Natural killer cell (primary cell): ENCODE measurements at regions of chr3 and their contacts with region 1.

Region 1: GRCh38 chr3:120558771-120559241 is 37.3 kb upstream of the NDUFB4 start:
- DNase-seq: peak; percentile 89 to 94
- ATAC-seq: peak; percentile 92 to 96 (median 95)
- H3K4me3 ChIP-seq: peak overlapping the region; percentile 17
- H3K4me3 Mint-ChIP-seq: peak overlapping the region; percentile 77
- H3K27ac ChIP-seq: no peak overlapping the region
- H3K27ac Mint-ChIP-seq: peak overlapping the region in 1 of 2 donors; percentile 49
- H3K4me1 ChIP-seq: peaks cover 10% of the 10 kb centered on the region
- H3K4me1 Mint-ChIP-seq: peaks cover 12 to 21% of the 10 kb centered on the region in 2 donors
- H3K27me3 ChIP-seq: no peaks in the 10 kb centered on the region
- H3K27me3 Mint-ChIP-seq: peaks cover 10% of the 10 kb centered on the region in 2 donors
- CTCF ChIP-seq: peak; percentile 96

Region 2: DNA sequence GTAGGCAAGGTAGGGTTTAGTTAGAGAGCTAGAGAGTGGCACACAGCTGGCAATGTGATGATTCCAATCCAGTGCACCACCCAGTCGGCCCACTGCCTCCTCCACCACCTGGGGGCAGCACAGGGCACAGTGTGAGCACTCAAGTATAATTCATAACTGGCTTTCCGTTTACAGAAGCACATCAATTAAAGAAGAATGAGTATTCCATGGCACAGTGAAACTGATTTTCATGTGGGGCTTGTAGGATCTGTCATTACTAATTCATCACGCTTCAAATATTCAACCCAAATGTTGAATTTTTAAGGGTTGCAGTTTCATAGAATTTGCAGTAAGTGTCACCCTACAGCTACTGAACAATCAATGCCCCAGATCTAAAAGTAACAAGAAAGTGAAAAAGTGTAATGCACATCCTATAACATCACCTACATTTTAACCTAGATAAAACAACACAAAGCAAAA is 1674.0 kb before region 1 on chr3:
- intact Hi-C with region 1: loop called (anchors 5 kb)
- DNase-seq: peak; percentile 65 to 83
- ATAC-seq: peak; percentile 80 to 95 (median 90)
- H3K4me3 ChIP-seq: no peak overlapping the region
- H3K4me3 Mint-ChIP-seq: no peak overlapping the region
- H3K27ac ChIP-seq: no peak overlapping the region
- H3K27ac Mint-ChIP-seq: no peak overlapping the region
- H3K4me1 ChIP-seq: no peaks in the 10 kb centered on the region
- H3K4me1 Mint-ChIP-seq: peaks cover 0 to 6% of the 10 kb centered on the region in 2 donors
- H3K27me3 ChIP-seq: no peaks in the 10 kb centered on the region
- H3K27me3 Mint-ChIP-seq: peaks cover 32 to 35% of the 10 kb centered on the region in 2 donors
- CTCF ChIP-seq: peak; percentile 87

Region 3: GRCh38 chr3:119891944-119892721 is 666.7 kb before region 1 on chr3:
- intact Hi-C with region 1: loop called (anchors 2 kb)
- DNase-seq: peak; percentile 15 to 81
- ATAC-seq: peak; percentile 67 to 81 (median 76)
- H3K4me3 ChIP-seq: no peak overlapping the region
- H3K4me3 Mint-ChIP-seq: no peak overlapping the region
- H3K27ac ChIP-seq: no peak overlapping the region
- H3K27ac Mint-ChIP-seq: peak overlapping the region in 1 of 2 donors; percentile 43
- H3K4me1 ChIP-seq: no peaks in the 10 kb centered on the region
- H3K4me1 Mint-ChIP-seq: peaks cover 9 to 10% of the 10 kb centered on the region in 2 donors
- H3K27me3 ChIP-seq: no peaks in the 10 kb centered on the region
- H3K27me3 Mint-ChIP-seq: no peaks in the 10 kb centered on the region
- CTCF ChIP-seq: peak; percentile 72

Region 4: DNA sequence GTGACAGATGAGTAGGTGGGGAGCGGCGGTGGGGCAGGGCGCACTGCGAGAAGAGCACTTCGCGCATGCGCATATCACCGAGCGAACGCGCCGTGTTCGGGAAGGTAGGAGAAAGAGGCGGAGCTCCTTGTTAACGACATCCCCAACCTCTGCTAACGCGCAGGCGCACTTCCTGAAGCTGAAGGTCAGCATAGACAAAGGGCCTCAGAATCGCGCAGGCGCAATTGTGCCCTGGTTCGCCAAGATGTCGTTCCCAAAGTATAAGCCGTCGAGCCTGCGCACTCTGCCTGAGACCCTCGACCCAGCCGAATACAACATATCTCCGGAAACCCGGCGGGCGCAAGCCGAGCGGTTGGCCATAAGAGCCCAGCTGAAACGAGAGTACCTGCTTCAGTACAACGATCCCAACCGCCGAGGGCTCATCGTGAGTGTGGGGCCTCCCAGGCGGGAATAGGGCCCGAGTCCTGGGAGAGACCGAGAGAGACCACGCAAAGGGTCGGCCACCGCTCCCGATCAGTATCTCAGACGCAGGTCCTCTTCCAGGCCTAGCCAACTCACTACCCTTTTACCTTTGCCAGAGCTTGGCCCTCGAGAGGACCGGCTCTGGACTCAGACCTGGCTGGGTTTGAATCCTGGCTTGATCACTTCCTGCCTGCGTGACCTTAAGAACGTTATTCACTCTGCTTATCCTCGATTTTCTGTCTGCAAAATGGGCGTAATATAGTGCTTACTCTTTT is 37.5 kb after region 1 on chr3 and contains the start of gene NDUFB4:
- intact Hi-C with region 1: loop called (anchors 2 kb)
- DNase-seq: peak; percentile 89 to 99
- ATAC-seq: peak; percentile 95 to 98 (median 96)
- H3K4me3 ChIP-seq: peak within 1 kb of the TSS; percentile 92
- H3K4me3 Mint-ChIP-seq: peak within 1 kb of the TSS; percentile 95
- H3K27ac ChIP-seq: peak within 1 kb of the TSS; percentile 93
- H3K27ac Mint-ChIP-seq: no peak within 1 kb of the TSS
- H3K4me1 ChIP-seq: no peaks in the 10 kb centered on the region
- H3K4me1 Mint-ChIP-seq: peaks cover 6 to 13% of the 10 kb centered on the region in 2 donors
- H3K27me3 ChIP-seq: no peaks in the 10 kb centered on the region
- H3K27me3 Mint-ChIP-seq: peaks cover 8 to 13% of the 10 kb centered on the region in 2 donors
- CTCF ChIP-seq: no peak
- total RNA-seq, gene NDUFB4: 59.5 to 86.9 (median 65.2) TPM

Region 5: DNA sequence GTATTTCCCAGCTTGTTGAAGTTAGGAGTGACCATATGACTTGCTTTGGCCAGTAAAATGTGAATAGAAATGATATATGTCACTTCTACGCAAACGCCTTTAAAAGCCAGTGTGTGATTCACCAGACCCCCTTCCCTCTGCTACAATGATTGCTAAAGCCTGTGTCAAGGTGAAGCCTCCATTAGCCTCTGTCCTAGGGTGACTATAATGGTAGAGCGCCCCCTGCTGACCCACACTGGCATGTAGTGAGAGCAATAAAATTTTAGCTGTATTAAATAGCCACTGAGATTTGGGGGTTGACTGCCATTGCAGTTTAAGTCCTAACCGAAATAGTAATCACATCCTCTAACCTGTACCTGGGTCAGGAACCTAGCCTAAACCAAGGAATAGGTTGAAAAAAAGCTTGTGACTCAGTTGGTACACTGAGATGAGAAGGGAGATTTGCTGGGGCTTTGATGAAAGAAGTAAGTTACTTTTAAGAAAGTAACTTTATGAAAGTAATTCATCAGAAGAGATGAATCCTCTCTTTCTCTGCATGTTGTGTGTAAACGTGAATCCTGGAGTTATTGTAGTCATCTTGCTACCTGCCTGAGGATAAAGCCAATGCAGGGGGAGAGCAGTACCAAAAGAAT is 236.3 kb after region 1 on chr3:
- intact Hi-C with region 1: loop called (anchors 1 kb)
- DNase-seq: peak; percentile 68 to 86
- ATAC-seq: peak; percentile 83 to 98 (median 97)
- H3K4me3 ChIP-seq: no peak overlapping the region
- H3K4me3 Mint-ChIP-seq: no peak overlapping the region
- H3K27ac ChIP-seq: no peak overlapping the region
- H3K27ac Mint-ChIP-seq: no peak overlapping the region
- H3K4me1 ChIP-seq: no peaks in the 10 kb centered on the region
- H3K4me1 Mint-ChIP-seq: no peaks in the 10 kb centered on the region
- H3K27me3 ChIP-seq: no peaks in the 10 kb centered on the region
- H3K27me3 Mint-ChIP-seq: peaks cover 0 to 3% of the 10 kb centered on the region in 2 donors
- CTCF ChIP-seq: peak; percentile 63

Region 6: DNA sequence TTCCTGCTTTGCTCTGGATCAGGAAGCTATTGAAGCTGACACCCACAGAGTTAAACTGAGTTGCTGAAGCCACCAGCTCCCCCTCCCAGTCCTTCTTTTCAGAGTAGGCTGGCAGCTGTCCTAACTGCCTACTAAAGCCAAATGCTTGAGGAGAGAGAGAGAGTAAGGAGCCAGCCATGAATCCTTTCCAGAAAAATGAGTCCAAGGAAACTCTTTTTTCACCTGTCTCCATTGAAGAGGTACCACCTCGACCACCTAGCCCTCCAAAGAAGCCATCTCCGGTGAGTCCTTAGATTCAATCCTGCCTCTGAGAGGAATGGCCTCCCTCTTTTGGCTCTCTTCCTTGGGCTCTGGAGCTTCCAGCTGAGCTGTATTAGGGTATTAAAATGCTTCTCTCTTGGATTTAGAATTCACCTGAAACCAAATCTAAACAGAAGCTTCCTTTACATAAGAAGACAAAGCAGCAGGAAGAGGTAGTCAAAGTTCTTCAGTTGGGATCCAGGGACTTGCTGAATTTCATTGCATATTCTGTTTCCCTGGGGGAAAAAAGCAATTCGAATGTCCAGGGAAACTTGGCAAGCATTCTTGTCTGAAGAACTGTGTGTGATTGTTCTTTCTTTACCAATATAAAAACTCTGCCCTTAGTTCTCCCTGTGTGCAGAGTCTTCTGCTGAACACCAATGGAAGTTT is 1335.6 kb after region 1 on chr3 and contains the start of gene SLC15A2:
- intact Hi-C with region 1: no loop called
- DNase-seq: no peak
- ATAC-seq: no peak
- H3K4me3 ChIP-seq: no peak within 1 kb of the TSS
- H3K4me3 Mint-ChIP-seq: no peak within 1 kb of the TSS
- H3K27ac ChIP-seq: no peak within 1 kb of the TSS
- H3K27ac Mint-ChIP-seq: no peak within 1 kb of the TSS
- H3K4me1 ChIP-seq: no peaks in the 10 kb centered on the region
- H3K4me1 Mint-ChIP-seq: no peaks in the 10 kb centered on the region
- H3K27me3 ChIP-seq: no peaks in the 10 kb centered on the region
- H3K27me3 Mint-ChIP-seq: no peaks in the 10 kb centered on the region
- CTCF ChIP-seq: no peak
- total RNA-seq, gene SLC15A2: 0.78 to 4.4 (median 2.2) TPM